Ascending aorta (tissue), 2 donors: ENCODE measurements at regions of chr5 and their contacts with region 1.

Region 1: DNA sequence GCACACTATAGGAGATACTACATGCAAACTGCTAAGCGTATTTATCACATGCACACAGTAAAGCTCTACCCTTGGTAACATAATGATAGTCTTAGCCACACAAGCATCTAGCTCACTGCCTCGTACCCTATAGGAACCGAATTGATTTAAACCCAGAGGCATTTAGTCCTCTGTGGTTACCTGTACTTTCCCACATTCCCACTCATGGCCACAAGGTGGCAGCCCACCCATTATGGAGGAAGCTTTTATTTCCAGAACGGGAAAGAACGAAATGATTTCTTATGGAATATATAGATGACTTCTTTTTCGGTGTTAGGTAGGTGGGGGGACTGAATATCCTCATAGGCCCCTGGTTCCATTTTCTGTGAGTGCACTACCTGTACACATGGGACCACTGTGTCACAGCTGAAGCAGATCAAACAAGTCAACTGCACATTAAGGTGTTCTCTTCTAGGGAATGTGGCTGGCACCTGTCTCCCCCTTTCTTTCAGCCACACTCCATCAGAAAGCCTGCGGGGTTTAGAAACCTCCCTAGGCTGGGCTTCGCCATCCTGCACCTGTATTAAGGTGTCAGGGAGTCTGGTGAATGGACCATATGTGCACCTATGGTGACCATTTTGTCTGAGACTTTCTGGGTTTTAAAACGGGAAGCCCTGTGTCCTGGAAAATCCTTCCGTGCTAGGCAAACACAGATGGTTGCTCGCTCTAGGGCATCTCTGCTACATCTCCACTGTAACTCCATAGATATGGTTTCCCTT is 313.2 kb downstream of the SLIT3 start:
- DNase-seq: peak in 1 of 2 donors; percentile 86
- H3K4me3 ChIP-seq: peak overlapping the region in 1 of 2 donors; percentile 25
- H3K27ac ChIP-seq: no peak overlapping the region
- H3K4me1 ChIP-seq: peaks cover 3 to 12% of the 10 kb centered on the region in 2 donors
- H3K27me3 ChIP-seq: no peaks in the 10 kb centered on the region
- CTCF ChIP-seq: peak; percentile 78 to 94 (median 88)

Region 2: GRCh38 chr5:168679515-168679920 is 308.2 kb before region 1 on chr5:
- intact Hi-C with region 1: loop called (anchors 5 kb)
- DNase-seq: peak in 1 of 2 donors; percentile 83
- H3K4me3 ChIP-seq: no peak overlapping the region
- H3K27ac ChIP-seq: no peak overlapping the region
- H3K4me1 ChIP-seq: peaks cover 0 to 3% of the 10 kb centered on the region in 2 donors
- H3K27me3 ChIP-seq: no peaks in the 10 kb centered on the region
- CTCF ChIP-seq: peak; percentile 68 to 94 (median 83)

Region 3: GRCh38 chr5:168706655-168707069 is 281.1 kb before region 1 on chr5:
- intact Hi-C with region 1: loop called (anchors 5 kb)
- DNase-seq: no peak
- H3K4me3 ChIP-seq: no peak overlapping the region
- H3K27ac ChIP-seq: no peak overlapping the region
- H3K4me1 ChIP-seq: no peaks in the 10 kb centered on the region
- H3K27me3 ChIP-seq: no peaks in the 10 kb centered on the region
- CTCF ChIP-seq: peak; percentile 44 to 71 (median 53)

Region 4: DNA sequence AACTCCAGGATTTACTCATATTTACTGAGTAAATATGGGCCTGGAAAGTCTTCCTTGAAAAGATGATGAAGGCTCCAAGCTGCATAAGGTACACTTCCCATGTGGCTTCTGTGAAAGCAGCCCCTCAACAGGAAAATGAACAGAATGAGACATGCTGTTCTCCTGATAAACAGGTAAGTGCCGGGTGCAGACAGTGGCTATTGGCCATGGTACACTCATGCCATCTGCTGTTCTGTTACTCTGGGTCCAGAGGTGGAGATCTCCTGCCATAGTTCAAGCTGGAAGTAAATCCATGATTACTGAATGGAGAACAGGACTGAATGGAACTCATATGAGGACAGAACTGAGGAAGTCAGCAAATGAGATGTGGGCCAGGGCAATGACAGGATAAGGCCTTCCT is 209.6 kb after region 1 on chr5:
- intact Hi-C with region 1: loop called (anchors 1 kb)
- DNase-seq: no peak
- H3K4me3 ChIP-seq: peak overlapping the region in 1 of 2 donors; percentile 42
- H3K27ac ChIP-seq: peak overlapping the region; percentile 56 to 77
- H3K4me1 ChIP-seq: peaks cover 6 to 14% of the 10 kb centered on the region in 2 donors
- H3K27me3 ChIP-seq: no peaks in the 10 kb centered on the region
- CTCF ChIP-seq: peak in 2 of 3 experiments; percentile 8 to 67

Region 5: GRCh38 chr5:169548315-169548714 is 560.6 kb after region 1 on chr5:
- intact Hi-C with region 1: loop called (anchors 5 kb)
- DNase-seq: no peak
- H3K4me3 ChIP-seq: no peak overlapping the region
- H3K27ac ChIP-seq: no peak overlapping the region
- H3K4me1 ChIP-seq: no peaks in the 10 kb centered on the region
- H3K27me3 ChIP-seq: no peaks in the 10 kb centered on the region
- CTCF ChIP-seq: peak in 2 of 3 experiments; percentile 17 to 34